Left ventricle myocardium inferior (tissue), 1 donor: ENCODE measurements at regions of chr22 and their contacts with region 1.

Region 1: GRCh38 chr22:31556627-31557203 is 60.4 kb downstream of the SFI1 start:
- DNase-seq: no peak
- H3K4me3 ChIP-seq: no peak overlapping the region
- H3K27ac ChIP-seq: no peak overlapping the region
- H3K4me1 ChIP-seq: no peaks in the 10 kb centered on the region
- H3K27me3 ChIP-seq: no peaks in the 10 kb centered on the region
- CTCF ChIP-seq: peak; percentile 70

Region 2: DNA sequence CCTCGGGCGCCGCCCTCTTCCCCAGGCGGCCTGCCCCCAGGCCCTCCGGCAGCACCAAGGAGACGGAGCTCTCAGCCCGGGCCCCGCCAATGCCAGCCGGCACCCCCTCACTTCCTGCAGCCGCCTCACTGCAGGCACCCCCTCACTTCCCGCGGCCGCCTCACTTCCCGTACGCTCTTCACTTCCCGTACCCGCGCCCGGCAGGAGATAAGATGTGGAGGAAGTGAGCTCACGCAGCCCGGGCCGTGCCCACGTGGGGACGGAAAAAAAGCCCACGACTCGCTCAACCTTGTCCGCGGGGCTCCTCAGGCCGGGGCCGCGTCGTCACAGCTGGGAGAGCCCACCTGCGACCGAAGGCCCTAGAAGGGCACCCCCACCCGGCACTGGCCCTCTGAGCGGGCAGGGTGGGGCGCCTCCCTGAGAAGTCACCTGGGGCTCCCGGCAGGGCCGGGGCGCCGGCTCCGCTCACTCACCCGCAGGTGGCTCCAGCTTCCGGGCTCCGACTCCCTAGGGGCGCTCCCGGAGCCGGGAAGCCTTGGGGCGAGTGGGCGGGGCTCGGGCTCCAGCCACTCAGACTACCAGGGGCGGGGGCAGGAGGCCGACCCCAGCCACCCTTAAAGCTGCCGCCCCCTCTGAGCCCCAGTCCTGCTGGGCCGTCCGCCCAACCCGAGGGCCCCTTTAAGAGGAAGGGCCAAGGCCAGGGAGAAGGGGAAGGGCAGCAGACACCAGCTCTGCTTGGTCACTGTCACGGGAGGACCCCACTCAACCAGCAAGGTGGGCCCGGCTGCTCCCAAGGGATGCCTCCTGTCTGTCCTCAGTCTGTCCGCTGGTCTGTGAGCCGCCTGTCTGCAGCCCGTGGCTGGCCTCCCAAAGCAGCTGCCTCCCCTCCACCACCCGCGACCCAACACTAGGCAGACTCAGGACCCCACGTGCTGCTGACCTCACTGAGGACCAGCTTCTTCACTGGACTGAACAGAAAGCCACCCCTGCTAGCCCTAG is 73.9 kb after region 1 on chr22:
- intact Hi-C with region 1: loop called (anchors 5 kb)
- DNase-seq: peak; percentile 82
- H3K4me3 ChIP-seq: peak overlapping the region; percentile 93
- H3K27ac ChIP-seq: peak overlapping the region; percentile 92
- H3K4me1 ChIP-seq: peaks cover 65% of the 10 kb centered on the region
- H3K27me3 ChIP-seq: no peaks in the 10 kb centered on the region
- CTCF ChIP-seq: no peak